ENCODE measurements at regions of chr1 and their contacts with region 1.

Region 1: DNA sequence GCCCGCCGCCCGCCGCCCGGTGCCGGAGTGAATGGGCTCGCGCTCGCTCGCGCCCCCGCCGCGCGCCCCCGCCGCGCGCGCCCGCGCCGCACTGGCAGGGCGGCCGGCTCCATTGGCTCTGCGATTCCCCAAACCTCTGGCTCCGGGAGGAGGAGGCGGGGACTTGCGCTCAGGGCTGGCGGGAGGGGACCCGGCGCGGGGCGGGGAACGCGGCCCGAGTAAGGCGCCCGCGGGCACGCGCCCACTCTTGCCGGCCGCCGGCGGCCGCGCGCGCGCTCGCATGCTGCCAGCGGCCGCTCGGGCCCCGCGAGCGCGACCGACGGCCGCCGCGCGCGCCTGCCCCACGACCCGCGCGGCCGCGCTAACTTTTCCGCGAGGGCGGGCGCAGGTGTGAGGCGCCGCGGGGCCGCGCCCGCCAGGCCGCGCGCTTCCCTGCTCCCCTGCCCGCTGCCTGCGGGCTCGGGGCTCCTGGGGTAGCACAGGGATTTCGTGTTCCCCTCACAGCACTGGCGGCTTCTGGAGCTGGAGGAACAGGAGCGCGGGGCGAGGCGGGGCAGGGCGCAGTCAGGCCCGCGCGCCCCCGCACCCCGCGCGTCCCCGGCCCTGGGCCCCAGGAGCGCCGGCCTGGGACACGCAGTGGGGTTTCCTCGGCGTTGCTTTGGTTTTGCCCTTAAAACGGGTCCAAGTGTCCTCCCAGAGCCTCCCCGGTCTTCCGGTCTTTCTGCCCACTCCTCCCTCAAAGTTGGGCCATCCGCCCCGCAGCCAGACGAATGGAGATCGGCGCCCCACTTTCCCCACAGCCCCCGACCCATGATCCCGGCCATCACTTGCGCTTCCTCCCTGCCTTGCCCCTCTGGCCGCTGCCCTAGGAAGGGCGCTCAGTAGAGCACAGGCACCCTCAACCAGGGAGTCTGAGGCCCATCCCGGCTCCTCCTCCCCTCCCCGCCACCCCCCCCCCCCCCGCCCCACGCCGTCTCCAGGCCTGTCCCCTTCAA is 101.5 kb downstream of the CASZ1 start:
- DNase-seq: peak; percentile 83
- H3K4me3 Mint-ChIP-seq: peak overlapping the region; percentile 69
- H3K27ac Mint-ChIP-seq: no peak overlapping the region
- H3K4me1 Mint-ChIP-seq: peaks cover 31% of the 10 kb centered on the region
- H3K27me3 Mint-ChIP-seq: no peaks in the 10 kb centered on the region

Region 2: DNA sequence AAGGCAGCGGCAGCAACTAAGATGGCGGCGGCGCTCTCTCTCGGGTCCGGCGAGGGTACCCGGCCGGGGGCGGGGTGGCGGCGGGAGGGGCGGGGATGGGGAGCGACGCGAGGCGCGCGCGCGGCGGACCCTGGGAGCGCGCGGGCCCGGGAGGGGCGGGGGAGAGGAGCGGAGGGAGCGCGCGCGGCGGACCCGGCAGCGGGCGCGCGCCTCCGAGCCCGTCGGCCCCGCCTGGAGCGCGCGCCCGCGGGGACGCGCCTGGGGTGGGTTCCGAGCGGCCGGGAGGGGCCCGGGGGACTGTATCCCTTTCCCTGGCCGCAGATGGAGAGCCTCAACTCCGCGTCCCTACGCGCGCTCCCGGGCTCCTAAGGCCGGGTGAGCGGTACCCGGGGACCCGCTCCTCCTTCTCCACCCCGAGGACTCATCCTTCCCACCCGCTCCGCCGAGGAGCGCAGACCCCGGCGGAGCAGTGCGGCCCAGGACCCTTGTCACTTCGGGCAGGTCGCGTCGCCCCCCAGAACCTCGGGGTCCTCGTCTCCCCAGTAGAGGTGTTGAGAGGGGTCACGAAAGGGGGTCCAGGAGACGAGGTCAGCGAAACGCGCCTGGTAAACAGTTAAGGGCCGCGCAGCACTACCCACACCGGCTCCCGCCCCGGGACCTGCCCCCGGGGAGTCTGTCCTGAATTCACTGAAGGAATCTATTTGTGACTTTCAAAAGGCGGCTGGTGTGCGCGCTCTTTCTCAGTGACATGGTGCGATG is 870.8 kb before region 1 on chr1 and contains the start of gene CLSTN1:
- CTCF ChIA-PET with region 1: no interaction called
- POLR2A ChIA-PET with region 1: no interaction called
- intact Hi-C with region 1: loop called (anchors 10 kb)
- DNase-seq: peak; percentile 93
- H3K4me3 Mint-ChIP-seq: peak within 1 kb of the TSS; percentile 94
- H3K27ac Mint-ChIP-seq: peak within 1 kb of the TSS; percentile 77
- H3K4me1 Mint-ChIP-seq: peaks cover 46% of the 10 kb centered on the region
- H3K27me3 Mint-ChIP-seq: no peaks in the 10 kb centered on the region
- total RNA-seq, gene CLSTN1: 33.6 to 34.1 TPM

Region 3: GRCh38 chr1:10716840-10717239 is 21.9 kb after region 1 on chr1:
- CTCF ChIA-PET with region 1: no interaction called
- POLR2A ChIA-PET with region 1: no interaction called
- intact Hi-C with region 1: no loop called
- DNase-seq: no peak
- H3K4me3 Mint-ChIP-seq: no peak overlapping the region
- H3K27ac Mint-ChIP-seq: no peak overlapping the region
- H3K4me1 Mint-ChIP-seq: no peaks in the 10 kb centered on the region
- H3K27me3 Mint-ChIP-seq: peaks cover 10% of the 10 kb centered on the region

Region 4: GRCh38 chr1:10731041-10731440 is 36.1 kb after region 1 on chr1:
- CTCF ChIA-PET with region 1: interaction called, 3 read pairs
- POLR2A ChIA-PET with region 1: no interaction called
- intact Hi-C with region 1: loop called (anchors 5 kb)
- DNase-seq: peak; percentile 13
- H3K4me3 Mint-ChIP-seq: no peak overlapping the region
- H3K27ac Mint-ChIP-seq: no peak overlapping the region
- H3K4me1 Mint-ChIP-seq: peaks cover 13% of the 10 kb centered on the region
- H3K27me3 Mint-ChIP-seq: peaks cover 6% of the 10 kb centered on the region

Region 5: DNA sequence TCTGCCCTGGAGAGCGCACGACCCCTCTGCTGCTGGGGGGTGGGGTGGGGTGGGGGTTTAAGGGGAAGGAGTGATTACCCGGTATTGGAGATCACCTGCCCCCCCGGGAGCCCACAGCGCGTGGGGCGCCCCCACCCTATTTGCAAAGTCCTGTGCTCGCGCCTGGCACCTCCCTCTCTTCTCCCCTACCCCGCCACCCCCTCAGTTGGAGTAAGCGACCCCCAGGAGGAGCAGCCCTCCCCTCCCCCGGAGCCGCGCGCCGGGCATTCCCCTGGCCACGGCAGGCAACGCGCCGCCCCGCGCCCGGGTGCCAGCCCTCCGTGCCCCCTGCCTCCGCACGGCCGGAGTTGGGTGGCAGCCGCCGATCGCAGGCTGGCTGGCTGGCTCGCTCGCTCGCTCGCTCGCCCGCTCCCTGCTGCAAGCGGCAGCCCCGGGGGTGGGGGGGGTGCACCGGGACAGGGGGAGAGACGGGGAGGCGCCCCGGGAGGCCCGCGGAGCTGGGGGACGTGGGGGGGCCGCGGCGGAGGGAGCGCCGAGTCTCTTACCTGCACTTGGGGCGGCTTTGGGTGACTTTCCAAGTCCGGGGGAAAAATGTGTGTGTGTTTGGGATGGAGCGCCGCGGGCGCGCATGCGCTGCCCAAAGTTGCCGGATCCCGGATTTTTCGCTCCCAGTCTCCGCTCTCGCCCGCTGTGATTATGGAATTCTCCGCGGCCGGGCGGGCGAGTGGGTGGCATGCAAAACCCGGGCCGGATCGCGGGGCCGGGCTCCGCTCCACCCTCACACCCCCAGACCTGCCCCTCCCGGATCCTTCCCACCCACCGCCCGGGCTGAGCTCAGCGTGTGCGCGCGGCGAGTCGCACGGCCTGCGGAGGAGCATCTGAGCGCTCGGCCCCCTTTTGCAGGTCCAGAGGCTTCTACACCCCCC is 101.4 kb after region 1 on chr1 and contains the start of gene CASZ1:
- CTCF ChIA-PET with region 1: no interaction called
- POLR2A ChIA-PET with region 1: no interaction called
- intact Hi-C with region 1: loop called (anchors 2 kb)
- DNase-seq: no peak
- H3K4me3 Mint-ChIP-seq: no peak within 1 kb of the TSS
- H3K27ac Mint-ChIP-seq: no peak within 1 kb of the TSS
- H3K4me1 Mint-ChIP-seq: peaks cover 13% of the 10 kb centered on the region
- H3K27me3 Mint-ChIP-seq: peaks cover 46% of the 10 kb centered on the region
- total RNA-seq, gene CASZ1: 5.5 to 6.3 TPM

Region 6: DNA sequence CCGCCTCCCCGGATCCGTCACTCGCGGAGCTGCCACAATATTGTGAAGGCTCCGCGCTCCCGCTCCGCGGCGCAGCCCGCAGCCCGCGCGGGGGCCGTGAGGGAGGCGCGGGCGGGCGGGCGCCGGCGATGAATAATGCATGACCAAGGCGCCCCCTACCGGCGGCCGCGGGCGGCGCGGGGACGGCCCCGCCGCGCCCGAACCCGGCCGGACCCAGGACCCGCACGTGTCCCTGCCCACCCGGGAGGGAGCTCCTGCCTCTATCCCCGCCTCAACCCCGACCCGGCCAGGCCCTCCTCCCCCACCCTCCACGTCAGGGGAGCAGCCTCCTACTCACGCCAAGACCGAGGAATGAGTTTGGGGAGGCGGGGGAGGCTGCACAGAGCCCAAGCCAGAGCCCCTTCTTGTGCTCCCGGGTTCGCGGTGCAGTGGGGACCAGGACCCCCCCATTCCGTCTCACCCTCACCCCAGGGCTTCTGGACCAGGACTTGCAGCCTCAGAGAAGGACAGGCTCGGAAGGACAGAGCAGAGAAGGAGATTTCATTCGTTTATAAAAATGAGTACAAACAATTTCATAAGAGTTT is 172.3 kb after region 1 on chr1:
- CTCF ChIA-PET with region 1: interaction called, 5 read pairs
- POLR2A ChIA-PET with region 1: no interaction called
- intact Hi-C with region 1: loop called (anchors 1 kb)
- DNase-seq: peak; percentile 60
- H3K4me3 Mint-ChIP-seq: no peak overlapping the region
- H3K27ac Mint-ChIP-seq: no peak overlapping the region
- H3K4me1 Mint-ChIP-seq: peaks cover 10% of the 10 kb centered on the region
- H3K27me3 Mint-ChIP-seq: peaks cover 60% of the 10 kb centered on the region

Region 7: GRCh38 chr1:10941891-10942541 is 247.1 kb after region 1 on chr1:
- CTCF ChIA-PET with region 1: interaction called, 5 read pairs
- POLR2A ChIA-PET with region 1: no interaction called
- intact Hi-C with region 1: loop called (anchors 1 kb)
- DNase-seq: peak; percentile 70
- H3K4me3 Mint-ChIP-seq: no peak overlapping the region
- H3K27ac Mint-ChIP-seq: no peak overlapping the region
- H3K4me1 Mint-ChIP-seq: peaks cover 26% of the 10 kb centered on the region
- H3K27me3 Mint-ChIP-seq: peaks cover 39% of the 10 kb centered on the region